Left colon (tissue), 2 donors: ENCODE measurements at regions of chr17 and their contacts with region 1.

Region 1: GRCh38 chr17:43994272-43995149 is 9.9 kb upstream of the NAGS start:
- DNase-seq: peak in 1 of 2 donors; percentile 57
- ATAC-seq: peak; percentile 85

Region 2: DNA sequence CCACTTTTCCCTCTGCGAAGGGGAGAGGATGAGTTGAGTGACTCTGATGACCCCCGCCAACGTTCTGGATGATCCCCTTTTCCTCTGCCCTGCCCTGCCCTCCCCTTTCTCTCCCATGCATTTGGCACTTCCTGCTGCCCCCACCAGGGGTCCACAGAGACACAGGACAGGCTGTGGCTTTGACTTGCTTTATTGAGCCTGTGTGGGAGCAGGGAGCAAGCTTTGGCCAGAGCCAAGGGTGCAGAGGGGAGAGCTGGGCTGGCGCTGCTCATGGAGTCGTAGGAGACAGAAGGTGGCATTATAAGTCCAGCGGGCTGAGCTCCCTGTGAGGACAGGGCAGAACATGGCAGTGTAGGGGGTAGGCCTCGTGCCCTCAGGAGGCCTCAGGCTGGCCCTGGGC is 53.9 kb before region 1 on chr17:
- intact Hi-C with region 1: loop called in 1 of 2 experiments (anchors 10 kb)
- DNase-seq: no peak
- ATAC-seq: no peak

Region 3: GRCh38 chr17:44033861-44034408 is 39.4 kb after region 1 on chr17:
- intact Hi-C with region 1: no loop called
- DNase-seq: no peak
- ATAC-seq: no peak

Region 4: DNA sequence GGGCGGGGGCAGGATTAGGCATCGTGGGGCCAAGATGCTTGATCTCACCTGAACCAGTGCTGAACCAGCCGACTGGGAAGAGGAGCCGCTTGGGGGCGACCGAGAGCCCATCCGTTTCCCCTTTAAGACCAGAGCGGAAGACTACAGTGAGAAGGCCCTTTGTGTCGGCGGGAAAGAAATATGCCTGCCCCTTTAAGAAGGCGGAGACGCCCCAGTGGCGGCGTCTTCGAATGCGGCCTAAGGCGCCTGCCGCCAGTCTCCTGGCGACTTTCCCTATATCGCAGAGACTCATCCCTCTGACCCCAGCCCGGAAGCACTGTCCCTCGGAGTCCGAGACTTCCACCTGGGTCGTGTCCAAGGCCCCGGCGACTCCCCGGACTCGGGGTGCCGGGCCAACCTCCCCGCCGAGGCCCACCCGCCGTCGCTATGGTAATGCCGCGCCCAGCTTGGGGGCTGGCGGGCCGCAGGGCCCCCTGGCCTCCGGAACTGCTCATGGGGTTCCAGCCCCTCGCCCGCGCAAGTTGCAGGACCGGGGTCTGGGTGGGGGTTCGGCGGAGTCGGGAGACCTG is 147.3 kb after region 1 on chr17 and contains the start of gene HROB:
- intact Hi-C with region 1: no loop called
- DNase-seq: peak; percentile 93 to 98
- ATAC-seq: peak; percentile 93
- total RNA-seq, gene HROB: 0.78 to 3.6 TPM